Activated CD4-positive, alpha-beta T cell treated with anti-CD3 and anti-CD28 coated beads for 36 hours (primary cell): ENCODE measurements at regions of chr7 and their contacts with region 1.

Region 1: GRCh38 chr7:125061776-125062397 is 132.3 kb upstream of the POT1 start:
- DNase-seq: no peak
- ATAC-seq: peak; percentile 68
- H3K4me3 Mint-ChIP-seq: no peak overlapping the region
- H3K27ac Mint-ChIP-seq: no peak overlapping the region
- H3K4me1 Mint-ChIP-seq: no peaks in the 10 kb centered on the region
- H3K27me3 Mint-ChIP-seq: peaks cover 4% of the 10 kb centered on the region

Region 2: GRCh38 chr7:125007327-125007726 is 54.6 kb before region 1 on chr7:
- CTCF ChIA-PET with region 1: no interaction called
- POLR2A ChIA-PET with region 1: no interaction called
- intact Hi-C with region 1: no loop called
- DNase-seq: no peak
- ATAC-seq: no peak
- H3K4me3 Mint-ChIP-seq: no peak overlapping the region
- H3K27ac Mint-ChIP-seq: no peak overlapping the region
- H3K4me1 Mint-ChIP-seq: no peaks in the 10 kb centered on the region
- H3K27me3 Mint-ChIP-seq: no peaks in the 10 kb centered on the region

Region 3: GRCh38 chr7:125090596-125090995 is 28.7 kb after region 1 on chr7:
- CTCF ChIA-PET with region 1: no interaction called
- POLR2A ChIA-PET with region 1: no interaction called
- intact Hi-C with region 1: no loop called
- DNase-seq: no peak
- ATAC-seq: no peak
- H3K4me3 Mint-ChIP-seq: no peak overlapping the region
- H3K27ac Mint-ChIP-seq: no peak overlapping the region
- H3K4me1 Mint-ChIP-seq: no peaks in the 10 kb centered on the region
- H3K27me3 Mint-ChIP-seq: no peaks in the 10 kb centered on the region

Region 4: DNA sequence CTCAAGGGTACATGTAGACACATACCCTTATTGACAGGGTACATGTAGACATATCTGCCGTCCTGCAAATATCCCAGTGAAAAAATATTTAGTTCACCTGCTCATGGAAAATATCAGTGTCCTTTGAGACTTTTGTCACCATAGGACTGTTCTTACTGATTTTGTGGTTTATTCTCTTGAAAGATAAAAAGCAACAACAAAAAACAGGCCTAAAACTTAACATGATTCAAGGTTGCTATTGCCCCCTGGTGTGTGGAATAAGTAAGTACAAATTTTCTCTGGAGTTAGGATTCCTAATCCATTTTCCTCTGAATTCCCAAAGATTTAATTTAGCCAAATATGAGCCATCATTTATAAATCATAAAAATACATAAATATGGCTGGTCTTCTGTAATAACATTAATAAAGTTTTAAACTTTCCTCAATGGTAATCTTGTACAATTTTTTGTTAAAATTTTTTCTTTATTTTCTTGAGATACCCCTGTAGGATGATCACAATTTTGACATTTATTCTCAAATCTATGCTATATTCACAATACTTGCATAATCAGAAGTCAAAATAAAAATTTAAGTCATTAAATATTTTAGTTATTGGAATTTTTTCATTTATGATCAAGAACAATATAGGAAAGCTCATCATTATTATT is 609.2 kb after region 1 on chr7:
- CTCF ChIA-PET with region 1: interaction called, 3 read pairs
- POLR2A ChIA-PET with region 1: no interaction called
- intact Hi-C with region 1: loop called in 1 of 2 experiments (anchors 5 kb)
- DNase-seq: no peak
- ATAC-seq: no peak
- H3K4me3 Mint-ChIP-seq: no peak overlapping the region
- H3K27ac Mint-ChIP-seq: no peak overlapping the region
- H3K4me1 Mint-ChIP-seq: no peaks in the 10 kb centered on the region
- H3K27me3 Mint-ChIP-seq: no peaks in the 10 kb centered on the region